ENCODE measurements at regions of chr22 and their contacts with region 1.

Region 1: DNA sequence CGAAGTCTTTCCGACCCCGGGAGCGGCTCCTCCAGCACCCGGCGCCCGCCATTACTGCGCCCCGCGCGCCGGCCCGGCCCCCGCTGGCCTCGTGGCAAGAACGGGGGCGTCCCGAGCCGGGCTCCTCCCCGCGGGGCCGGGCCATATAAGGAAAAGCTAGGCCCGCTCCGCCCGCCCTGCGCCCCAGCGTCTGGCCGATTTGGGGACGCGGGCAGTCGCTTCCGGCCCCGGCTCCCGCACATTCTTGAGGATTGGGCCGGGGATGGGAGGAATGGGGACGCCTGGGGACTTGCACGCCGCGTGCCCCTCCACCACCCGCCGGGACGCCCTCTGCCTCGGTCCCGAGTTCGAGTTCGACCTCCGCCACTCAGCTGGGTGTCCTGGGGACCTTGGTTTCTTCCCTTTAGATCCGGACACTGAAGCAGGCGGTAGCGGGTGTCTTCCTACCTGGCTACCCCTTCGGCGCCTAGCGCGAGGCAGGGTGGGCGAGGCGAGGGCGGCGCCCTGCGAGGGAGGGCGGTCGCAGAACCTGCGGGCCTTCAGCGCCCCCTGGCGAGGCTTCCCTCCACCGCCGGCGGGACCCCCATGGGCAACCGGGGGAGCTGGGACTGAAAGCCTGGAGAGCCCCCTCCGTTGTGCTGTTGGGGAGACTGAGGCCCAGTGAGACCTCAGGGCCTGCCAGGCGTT is 3.8 kb downstream of the SMTN start:
- DNase-seq: peak; percentile 96
- ATAC-seq: peak; percentile 82

Region 2: GRCh38 chr22:30606455-30607299 is 478.3 kb before region 1 on chr22 and contains the start of gene TCN2:
- intact Hi-C with region 1: no loop called
- DNase-seq: peak; percentile 84
- ATAC-seq: peak; percentile 80
- total RNA-seq, gene TCN2: 16.7 TPM

Region 3: DNA sequence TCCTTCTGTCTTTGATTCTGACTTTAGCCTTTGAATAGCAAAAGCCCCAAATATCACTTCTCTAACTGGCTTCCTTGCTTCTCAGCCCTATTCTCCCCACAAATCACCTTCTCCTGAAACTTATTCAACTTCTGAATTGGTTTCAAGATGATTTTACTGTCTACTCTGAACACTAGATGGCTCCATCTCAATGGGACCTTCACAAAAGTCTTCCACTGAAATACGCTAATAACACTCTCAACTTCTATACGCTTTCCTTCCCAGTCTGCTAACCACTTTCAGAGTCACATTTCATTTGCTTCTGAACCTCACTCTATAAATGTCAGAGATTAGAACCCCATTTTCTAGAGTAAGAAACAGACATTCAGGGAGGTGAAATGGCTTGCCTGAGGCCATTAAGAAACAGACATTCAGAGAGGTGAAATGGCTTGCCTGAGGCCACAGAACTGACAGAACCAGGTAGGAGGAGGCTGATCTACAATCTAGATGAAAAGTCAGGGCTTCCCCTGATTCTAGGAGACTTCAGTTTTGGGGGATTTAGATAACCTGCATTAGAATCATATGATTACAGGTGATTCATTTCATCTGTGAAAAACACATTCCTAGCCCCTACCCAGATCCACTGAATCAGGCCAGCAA is 137.0 kb before region 1 on chr22:
- intact Hi-C with region 1: loop called (anchors 1 kb)
- DNase-seq: no peak
- ATAC-seq: peak; percentile 61

Region 4: GRCh38 chr22:30968924-30969539 is 115.9 kb before region 1 on chr22 and contains the start of gene TUG1:
- intact Hi-C with region 1: loop called (anchors 1 kb)
- DNase-seq: peak; percentile 99
- ATAC-seq: peak; percentile 99
- total RNA-seq, gene TUG1: 32.3 TPM

Region 5: DNA sequence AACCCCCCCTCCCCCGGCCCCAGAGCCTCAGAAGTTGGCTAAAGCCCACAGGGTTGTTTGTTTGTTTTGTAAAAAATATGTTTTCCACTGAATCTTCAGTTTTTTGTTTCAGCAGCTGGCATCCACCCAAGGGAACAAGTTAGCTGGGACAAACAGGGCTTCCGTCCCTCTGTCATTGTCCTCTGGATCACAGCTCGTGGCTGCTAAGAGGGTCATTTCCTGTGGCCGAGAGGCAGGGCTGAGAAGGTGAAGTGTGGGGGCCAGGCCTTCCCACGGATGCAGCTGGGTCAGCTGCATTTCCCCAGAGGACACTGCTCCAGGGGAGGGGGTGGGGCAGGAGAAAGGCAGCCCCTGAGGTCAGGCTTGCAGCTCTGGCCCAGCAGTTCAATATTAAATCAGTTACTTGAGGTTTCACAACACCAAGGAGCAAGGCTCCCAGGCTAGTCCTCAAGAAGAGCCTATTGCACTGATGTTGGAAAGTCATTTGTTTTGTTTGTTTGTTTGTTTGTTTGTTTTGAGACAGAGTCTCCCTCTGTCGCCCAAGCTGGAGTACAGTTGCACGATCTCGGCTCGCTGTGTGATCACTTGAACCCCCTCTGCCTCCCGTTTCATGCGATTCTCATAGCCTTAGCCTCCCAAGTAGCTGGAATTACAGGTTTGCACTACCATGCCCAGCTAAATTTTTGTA is 38.3 kb before region 1 on chr22:
- intact Hi-C with region 1: loop called (anchors 2 kb)
- DNase-seq: peak; percentile 83
- ATAC-seq: peak; percentile 86

Region 6: DNA sequence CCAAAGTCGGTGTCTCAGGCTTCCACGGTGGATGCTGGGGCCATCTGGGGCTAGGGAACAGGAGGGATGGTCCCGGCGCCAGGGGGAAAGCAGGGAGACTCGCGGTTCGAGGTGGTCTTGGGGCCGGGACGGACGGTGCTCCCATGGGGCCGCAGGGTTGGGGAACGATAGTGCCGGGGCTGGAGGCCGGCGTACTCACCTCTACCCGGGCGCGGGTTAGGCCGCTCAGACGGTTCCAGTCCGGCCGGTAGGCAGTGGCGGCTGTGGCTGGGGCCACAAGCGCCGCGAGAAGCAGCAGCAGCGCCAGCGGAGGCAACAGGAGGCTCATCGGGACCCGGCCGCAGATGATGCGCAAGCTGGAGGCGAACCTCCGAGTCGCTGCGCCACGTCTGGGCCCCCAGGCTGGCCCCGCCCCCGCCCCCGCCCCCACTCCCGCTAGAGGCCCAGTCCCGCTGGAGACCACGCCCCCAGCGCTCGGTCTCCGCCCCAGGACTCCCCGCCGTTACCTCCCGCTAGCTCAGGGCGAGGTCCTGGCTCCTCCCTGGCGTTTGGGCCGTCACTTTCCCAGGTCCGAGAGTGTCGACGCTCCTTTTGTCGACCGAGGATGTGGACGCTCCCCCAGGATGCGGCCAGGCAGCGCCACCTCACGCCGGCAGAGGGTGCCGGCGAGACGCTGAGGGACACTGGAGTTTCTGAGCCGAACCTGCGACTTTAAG is 22.4 kb after region 1 on chr22 and contains the start of gene SELENOM:
- intact Hi-C with region 1: loop called (anchors 2 kb)
- DNase-seq: peak; percentile 96
- ATAC-seq: peak; percentile 95
- total RNA-seq, gene SELENOM: 48.2 TPM

Region 7: GRCh38 chr22:31148953-31149627 is 64.1 kb after region 1 on chr22:
- intact Hi-C with region 1: loop called (anchors 1 kb)
- DNase-seq: no peak
- ATAC-seq: peak; percentile 96

Region 8: DNA sequence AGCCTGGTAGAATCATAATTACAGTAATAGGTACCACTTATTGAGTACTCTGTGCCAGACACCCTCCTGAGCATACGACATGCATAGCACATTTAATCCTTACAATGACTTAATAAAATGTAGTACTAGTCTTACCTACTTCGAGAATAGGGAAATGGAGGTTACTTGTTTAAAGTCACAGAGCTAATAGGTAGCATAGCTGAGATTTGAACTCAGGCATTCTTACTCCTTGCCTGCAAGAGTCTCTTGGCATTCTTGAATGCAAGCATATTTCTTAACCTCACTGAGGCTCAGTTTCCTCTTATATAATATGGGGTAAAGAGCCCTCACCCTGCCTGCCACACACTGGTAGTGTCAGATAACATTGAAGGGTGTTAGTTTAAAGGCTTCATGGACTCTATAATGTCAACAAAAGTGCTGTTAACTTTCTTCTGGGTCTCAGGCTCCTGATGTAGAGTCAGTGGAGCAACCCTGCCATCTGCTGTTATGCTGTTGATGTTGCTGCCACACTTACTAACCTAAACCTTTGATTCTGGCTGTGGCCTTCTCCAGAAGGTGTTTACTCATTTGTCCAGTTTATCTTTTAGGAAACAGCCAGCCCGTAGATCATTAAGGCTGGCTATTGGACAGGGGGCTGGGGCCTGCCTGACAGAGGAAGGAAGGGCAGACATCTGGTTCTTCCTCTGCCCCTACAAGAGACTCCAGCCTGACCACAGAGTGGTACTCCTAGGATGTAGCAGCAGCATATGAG is 146.1 kb after region 1 on chr22:
- intact Hi-C with region 1: loop called (anchors 5 kb)
- DNase-seq: no peak
- ATAC-seq: peak; percentile 68